CD8-positive, alpha-beta T cell (primary cell): ENCODE measurements at regions of chr9 and their contacts with region 1.

Region 1: DNA sequence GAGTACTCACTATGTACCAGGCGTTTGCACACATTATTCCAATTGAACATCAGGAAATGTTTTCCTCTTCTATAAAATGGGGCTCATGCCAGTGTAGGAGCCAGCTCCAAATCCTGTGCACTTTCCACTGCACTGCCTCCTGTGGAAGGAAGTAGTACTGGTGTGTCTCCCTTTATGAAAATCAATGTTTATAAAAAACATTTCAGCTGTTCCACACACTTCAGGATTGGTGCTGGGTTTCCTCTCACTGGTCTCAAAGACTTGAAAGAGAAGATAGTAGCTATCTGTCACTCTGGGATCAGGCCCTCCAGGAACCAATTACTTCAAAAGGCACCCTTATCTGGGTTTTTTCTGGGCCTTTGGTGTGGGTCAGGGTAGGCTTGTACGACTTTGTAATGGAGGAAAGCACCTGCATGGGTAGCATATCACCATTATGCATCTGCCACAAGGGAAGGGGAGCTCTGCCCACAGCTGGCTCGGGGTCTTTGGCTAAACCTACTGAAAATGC is 32.5 kb downstream of the RAB14 start:
- DNase-seq: peak in 5 of 9 experiments; percentile 16 to 69 (median 39)
- ATAC-seq: peak; percentile 89
- H3K4me3 ChIP-seq: no peak overlapping the region
- H3K4me3 Mint-ChIP-seq: no peak overlapping the region
- H3K27ac ChIP-seq: peak overlapping the region; percentile 16 to 49
- H3K27ac Mint-ChIP-seq: peak overlapping the region; percentile 83
- H3K4me1 ChIP-seq: peaks cover 20% of the 10 kb centered on the region
- H3K4me1 Mint-ChIP-seq: peaks cover 23% of the 10 kb centered on the region
- H3K27me3 ChIP-seq: no peaks in the 10 kb centered on the region
- H3K27me3 Mint-ChIP-seq: no peaks in the 10 kb centered on the region
- CTCF ChIP-seq: peak; percentile 57

Region 2: GRCh38 chr9:120783602-120784047 is 385.5 kb before region 1 on chr9:
- CTCF ChIA-PET with region 1: no interaction called
- POLR2A ChIA-PET with region 1: no interaction called
- intact Hi-C with region 1: loop called in 1 of 2 experiments (anchors 10 kb)
- DNase-seq: peak in 1 of 9 experiments; percentile 24
- ATAC-seq: no peak
- H3K4me3 ChIP-seq: no peak overlapping the region
- H3K4me3 Mint-ChIP-seq: no peak overlapping the region
- H3K27ac ChIP-seq: no peak overlapping the region
- H3K27ac Mint-ChIP-seq: peak overlapping the region; percentile 32
- H3K4me1 ChIP-seq: peaks cover 10% of the 10 kb centered on the region
- H3K4me1 Mint-ChIP-seq: peaks cover 65% of the 10 kb centered on the region
- H3K27me3 ChIP-seq: no peaks in the 10 kb centered on the region
- H3K27me3 Mint-ChIP-seq: no peaks in the 10 kb centered on the region
- CTCF ChIP-seq: no peak

Region 3: GRCh38 chr9:121107041-121107440 is 62.1 kb before region 1 on chr9:
- CTCF ChIA-PET with region 1: interaction called, 6 read pairs
- POLR2A ChIA-PET with region 1: no interaction called
- intact Hi-C with region 1: loop called in 1 of 2 experiments (anchors 5 kb)
- DNase-seq: peak in 2 of 9 experiments; percentile 39 to 59
- ATAC-seq: peak; percentile 96
- H3K4me3 ChIP-seq: no peak overlapping the region
- H3K4me3 Mint-ChIP-seq: no peak overlapping the region
- H3K27ac ChIP-seq: no peak overlapping the region
- H3K27ac Mint-ChIP-seq: no peak overlapping the region
- H3K4me1 ChIP-seq: peaks cover 4% of the 10 kb centered on the region
- H3K4me1 Mint-ChIP-seq: peaks cover 22% of the 10 kb centered on the region
- H3K27me3 ChIP-seq: no peaks in the 10 kb centered on the region
- H3K27me3 Mint-ChIP-seq: no peaks in the 10 kb centered on the region
- CTCF ChIP-seq: peak; percentile 61

Region 4: GRCh38 chr9:121185178-121185745 is 16.1 kb after region 1 on chr9:
- CTCF ChIA-PET with region 1: interaction called, 5 read pairs
- POLR2A ChIA-PET with region 1: no interaction called
- intact Hi-C with region 1: loop called in 1 of 2 experiments (anchors 2 kb)
- DNase-seq: no peak
- ATAC-seq: peak; percentile 31
- H3K4me3 ChIP-seq: no peak overlapping the region
- H3K4me3 Mint-ChIP-seq: no peak overlapping the region
- H3K27ac ChIP-seq: peak overlapping the region in 1 of 2 experiments; percentile 14
- H3K27ac Mint-ChIP-seq: peak overlapping the region; percentile 83
- H3K4me1 ChIP-seq: peaks cover 39% of the 10 kb centered on the region
- H3K4me1 Mint-ChIP-seq: peaks cover 76% of the 10 kb centered on the region
- H3K27me3 ChIP-seq: no peaks in the 10 kb centered on the region
- H3K27me3 Mint-ChIP-seq: no peaks in the 10 kb centered on the region
- CTCF ChIP-seq: no peak